ENCODE measurements at regions of chr15 and their contacts with region 1.

Region 1: DNA sequence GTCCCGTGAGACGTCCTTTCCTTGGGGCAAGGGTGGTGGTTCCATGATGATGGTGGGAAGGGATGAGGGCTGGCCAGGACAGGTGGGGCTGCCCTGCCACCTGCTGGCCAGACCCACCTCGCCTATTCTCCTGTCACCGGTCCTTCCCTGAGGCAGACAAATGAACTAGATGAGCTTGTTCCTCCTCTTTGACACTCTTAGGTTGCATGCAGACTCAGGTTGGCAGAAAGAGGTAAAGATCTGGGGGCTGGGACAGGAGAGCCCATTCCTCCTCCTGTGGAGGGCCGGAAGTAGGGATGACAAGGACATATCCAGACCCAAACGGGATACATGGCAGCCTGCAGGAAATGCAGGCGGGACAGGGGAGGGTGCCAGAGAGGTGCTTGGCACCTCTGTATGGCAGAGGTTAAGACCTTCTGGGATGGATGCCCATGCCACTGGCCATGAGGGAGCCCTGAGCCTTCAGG is 38.6 kb downstream of the ACSBG1 start:
- DNase-seq: peak; percentile 62
- ATAC-seq: peak; percentile 90
- H3K4me3 Mint-ChIP-seq: no peak overlapping the region
- H3K27ac Mint-ChIP-seq: no peak overlapping the region
- H3K4me1 Mint-ChIP-seq: no peaks in the 10 kb centered on the region
- H3K27me3 Mint-ChIP-seq: peaks cover 5% of the 10 kb centered on the region

Region 2: GRCh38 chr15:77966540-77967290 is 229.1 kb before region 1 on chr15:
- CTCF ChIA-PET with region 1: interaction called, 10 read pairs
- POLR2A ChIA-PET with region 1: no interaction called
- DNase-seq: peak; percentile 66
- ATAC-seq: peak; percentile 49
- H3K4me3 Mint-ChIP-seq: no peak overlapping the region
- H3K27ac Mint-ChIP-seq: no peak overlapping the region
- H3K4me1 Mint-ChIP-seq: peaks cover 17% of the 10 kb centered on the region
- H3K27me3 Mint-ChIP-seq: peaks cover 28% of the 10 kb centered on the region

Region 3: GRCh38 chr15:78131295-78132061 is 64.3 kb before region 1 on chr15 and contains the start of gene CIB2:
- CTCF ChIA-PET with region 1: interaction called, 211 read pairs
- POLR2A ChIA-PET with region 1: interaction called, 7 read pairs
- DNase-seq: peak; percentile 79
- ATAC-seq: peak; percentile 90
- H3K4me3 Mint-ChIP-seq: peak within 1 kb of the TSS; percentile 78
- H3K27ac Mint-ChIP-seq: peak within 1 kb of the TSS; percentile 73
- H3K4me1 Mint-ChIP-seq: peaks cover 24% of the 10 kb centered on the region
- H3K27me3 Mint-ChIP-seq: no peaks in the 10 kb centered on the region
- total RNA-seq, gene CIB2: 1.4 to 2.2 TPM

Region 4: DNA sequence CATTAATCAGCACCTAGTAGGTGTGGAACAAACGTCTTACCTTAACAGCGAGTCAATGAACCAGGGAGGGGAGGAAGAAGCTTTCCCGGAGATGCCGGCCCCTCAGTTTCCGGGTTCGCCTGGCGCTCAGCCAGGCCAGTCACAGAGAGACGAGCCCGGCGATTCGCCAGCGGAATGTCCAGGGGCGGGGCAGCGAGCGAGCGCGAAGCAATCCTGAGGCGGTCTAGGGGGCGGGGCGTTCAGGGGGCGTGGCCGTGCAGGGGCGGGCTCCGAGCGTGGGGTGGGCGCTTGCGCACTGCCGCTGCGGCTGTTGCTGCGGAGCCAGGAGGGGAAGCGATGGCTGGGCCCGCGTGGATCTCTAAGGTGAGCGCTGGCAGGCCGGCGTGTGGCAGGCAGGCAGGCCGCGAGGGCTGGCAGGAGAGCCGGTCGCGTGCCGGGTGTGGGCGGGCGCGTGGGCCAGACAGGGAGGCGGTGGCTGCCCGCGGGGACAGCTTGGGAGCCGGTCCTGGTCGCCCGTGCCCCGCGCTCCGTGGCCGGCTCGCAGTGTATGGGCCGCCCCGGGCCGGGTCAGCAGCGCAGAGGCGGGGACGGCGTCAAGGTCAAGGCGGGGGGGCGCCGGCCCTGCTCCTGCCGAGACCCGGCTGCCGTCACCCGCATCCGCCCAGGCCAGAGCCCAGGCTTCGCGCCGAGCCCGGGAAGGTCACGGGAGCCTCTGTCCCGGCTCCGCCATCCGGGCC is 46.5 kb before region 1 on chr15 and contains the start of gene IDH3A:
- CTCF ChIA-PET with region 1: interaction called, 34 read pairs
- POLR2A ChIA-PET with region 1: interaction called, 3 read pairs
- DNase-seq: peak; percentile 100
- ATAC-seq: peak; percentile 96
- H3K4me3 Mint-ChIP-seq: peak within 1 kb of the TSS; percentile 94
- H3K27ac Mint-ChIP-seq: peak within 1 kb of the TSS; percentile 92
- H3K4me1 Mint-ChIP-seq: peaks cover 48% of the 10 kb centered on the region
- H3K27me3 Mint-ChIP-seq: no peaks in the 10 kb centered on the region
- total RNA-seq, gene IDH3A: 80.7 to 84.2 TPM

Region 5: DNA sequence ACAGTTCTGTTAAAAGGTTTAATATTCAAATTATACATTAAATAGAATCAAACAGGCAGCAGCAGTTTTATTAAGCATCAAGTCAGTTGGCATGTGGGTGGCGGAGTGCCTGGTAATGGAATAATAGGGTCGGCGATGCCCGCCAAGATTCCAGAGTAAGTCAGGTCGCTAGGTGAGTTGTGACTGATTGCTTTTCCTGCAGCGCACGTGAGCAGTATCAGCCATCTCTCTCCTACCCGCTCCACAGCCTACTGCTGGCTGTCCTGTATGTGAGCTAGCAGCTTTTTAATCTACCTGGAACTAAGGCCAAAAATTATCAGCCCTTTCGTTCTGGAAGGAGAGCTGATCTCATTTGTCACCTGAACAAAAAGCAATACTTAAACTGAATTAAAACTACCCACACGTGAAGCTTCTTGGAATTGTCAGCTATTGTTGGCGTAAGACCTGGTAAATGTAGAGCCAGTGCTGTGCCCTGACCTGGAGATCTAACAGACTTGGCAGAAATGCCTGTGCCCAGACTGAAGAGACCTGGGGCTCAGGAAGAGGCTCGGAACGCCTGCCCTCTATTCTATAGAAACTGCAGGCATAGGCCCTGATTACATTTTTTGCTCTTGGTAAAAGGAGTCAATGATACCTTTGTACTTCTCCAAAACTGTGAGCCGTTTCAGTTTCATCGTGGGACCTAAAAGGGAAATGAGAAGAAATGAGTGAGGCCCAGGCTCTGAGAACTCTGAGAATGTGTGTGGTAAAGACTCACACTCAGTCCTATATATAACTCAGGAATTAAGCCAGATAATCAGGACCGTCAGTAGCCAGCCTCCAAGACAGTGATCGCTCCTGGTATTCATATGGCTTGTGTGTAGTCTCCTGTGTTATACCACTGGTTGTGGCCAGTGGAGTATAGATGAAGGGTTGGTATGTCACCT is 24.7 kb before region 1 on chr15:
- CTCF ChIA-PET with region 1: interaction called, 32 read pairs
- POLR2A ChIA-PET with region 1: no interaction called
- DNase-seq: no peak
- ATAC-seq: no peak
- H3K4me3 Mint-ChIP-seq: no peak overlapping the region
- H3K27ac Mint-ChIP-seq: peak overlapping the region; percentile 8
- H3K4me1 Mint-ChIP-seq: peaks cover 68% of the 10 kb centered on the region
- H3K27me3 Mint-ChIP-seq: peaks cover 2% of the 10 kb centered on the region

Region 6: GRCh38 chr15:78212546-78213424 is 17.0 kb after region 1 on chr15:
- CTCF ChIA-PET with region 1: interaction called, 13 read pairs
- POLR2A ChIA-PET with region 1: no interaction called
- DNase-seq: no peak
- ATAC-seq: no peak
- H3K4me3 Mint-ChIP-seq: no peak overlapping the region
- H3K27ac Mint-ChIP-seq: no peak overlapping the region
- H3K4me1 Mint-ChIP-seq: no peaks in the 10 kb centered on the region
- H3K27me3 Mint-ChIP-seq: peaks cover 9% of the 10 kb centered on the region

Region 7: GRCh38 chr15:78241007-78241406 is 45.2 kb after region 1 on chr15:
- CTCF ChIA-PET with region 1: interaction called, 36 read pairs
- POLR2A ChIA-PET with region 1: no interaction called
- DNase-seq: peak; percentile 89
- ATAC-seq: peak; percentile 93
- H3K4me3 Mint-ChIP-seq: no peak overlapping the region
- H3K27ac Mint-ChIP-seq: no peak overlapping the region
- H3K4me1 Mint-ChIP-seq: peaks cover 6% of the 10 kb centered on the region
- H3K27me3 Mint-ChIP-seq: peaks cover 2% of the 10 kb centered on the region

Measured in activated CD8-positive, alpha-beta T cell treated with anti-CD3 and anti-CD28 coated beads, Interleukin-2, amount 10 ng/mL, durations not matched to agents 7 days and 5 days (primary cell).